ENCODE measurements at regions of chr14 and their contacts with region 1.

Region 1: GRCh38 chr14:61125867-61126572 is 145.0 kb downstream of the SLC38A6 start:
- DNase-seq: peak; percentile 80
- H3K4me3 ChIP-seq: no peak overlapping the region
- H3K27ac ChIP-seq: peak overlapping the region; percentile 36
- H3K4me1 ChIP-seq: peaks cover 37% of the 10 kb centered on the region
- H3K27me3 ChIP-seq: no peaks in the 10 kb centered on the region
- CTCF ChIP-seq: no peak
- POLR2A ChIP-seq: no peak

Region 2: DNA sequence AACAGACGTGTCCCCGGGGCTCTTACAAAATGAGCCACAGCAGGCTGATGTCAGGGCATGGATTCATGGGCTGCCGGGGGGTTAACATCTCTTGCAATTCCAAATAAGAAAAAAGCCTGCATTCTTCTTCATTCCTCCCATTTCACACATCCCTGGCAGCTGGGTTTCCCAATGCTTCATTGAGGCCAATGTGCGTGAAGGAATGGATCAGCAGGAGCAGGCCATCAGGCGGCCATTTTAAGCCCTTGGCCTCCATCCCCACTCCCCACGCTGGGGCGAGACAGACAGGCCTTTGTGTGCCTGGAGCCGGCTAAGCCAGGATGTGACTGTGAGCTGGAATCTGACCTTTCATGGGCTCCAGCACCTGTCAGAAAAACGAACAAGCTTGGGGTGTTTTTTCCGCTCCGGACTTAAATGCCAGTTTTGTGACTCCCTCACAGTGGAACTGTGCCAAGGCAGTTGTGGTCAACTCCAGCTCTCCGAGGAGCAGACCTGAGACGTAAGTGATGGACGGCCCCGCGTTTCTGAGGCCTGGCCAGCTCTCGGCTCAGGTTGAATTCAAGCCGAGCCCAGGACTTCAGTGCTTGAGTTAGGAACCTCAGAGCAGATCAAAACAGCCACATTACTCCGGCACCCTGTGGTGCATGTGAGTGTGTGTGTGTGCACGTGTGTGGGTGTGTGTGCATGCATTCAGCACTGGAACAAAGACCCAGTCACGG is 22.0 kb after region 1 on chr14:
- CTCF ChIA-PET with region 1: interaction called, 13 read pairs
- POLR2A ChIA-PET with region 1: interaction called, 8 read pairs
- dilution Hi-C with region 1: no loop called
- intact Hi-C with region 1: loop called (anchors 1 kb)
- DNase-seq: peak; percentile 85
- H3K4me3 ChIP-seq: no peak overlapping the region
- H3K27ac ChIP-seq: peak overlapping the region; percentile 84
- H3K4me1 ChIP-seq: peaks cover 28% of the 10 kb centered on the region
- H3K27me3 ChIP-seq: no peaks in the 10 kb centered on the region
- CTCF ChIP-seq: no peak
- POLR2A ChIP-seq: no peak

Region 3: DNA sequence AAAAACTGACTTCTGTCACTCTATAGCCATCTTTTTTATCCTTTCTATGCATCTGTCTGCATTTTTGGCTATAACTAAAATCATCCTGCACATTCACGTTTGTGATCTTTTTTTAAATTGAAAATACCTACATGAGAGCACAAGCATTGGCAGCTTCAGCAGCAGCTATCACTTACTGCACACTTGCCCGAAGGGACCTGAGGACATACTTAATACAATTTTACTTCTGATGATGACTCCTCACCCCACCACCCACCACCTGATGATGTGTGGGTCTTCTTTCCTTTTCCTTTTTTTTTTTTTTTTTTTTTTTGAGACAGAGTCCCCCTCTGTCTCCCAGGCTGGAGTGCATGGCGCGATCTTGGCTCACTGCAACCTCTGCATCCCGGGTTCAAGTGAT is 355.7 kb after region 1 on chr14:
- CTCF ChIA-PET with region 1: no interaction called
- POLR2A ChIA-PET with region 1: interaction called, 13 read pairs
- dilution Hi-C with region 1: no loop called
- intact Hi-C with region 1: no loop called
- DNase-seq: no peak
- H3K4me3 ChIP-seq: no peak overlapping the region
- H3K27ac ChIP-seq: no peak overlapping the region
- H3K4me1 ChIP-seq: peaks cover 28% of the 10 kb centered on the region
- H3K27me3 ChIP-seq: no peaks in the 10 kb centered on the region
- CTCF ChIP-seq: no peak
- POLR2A ChIP-seq: no peak

Measured in endothelial cell of umbilical vein (primary cell).